Activated B cell treated with CpG ODN at 0.5 μM for 24 hours (primary cell): ENCODE measurements at regions of chr11 and their contacts with region 1.

Region 1: DNA sequence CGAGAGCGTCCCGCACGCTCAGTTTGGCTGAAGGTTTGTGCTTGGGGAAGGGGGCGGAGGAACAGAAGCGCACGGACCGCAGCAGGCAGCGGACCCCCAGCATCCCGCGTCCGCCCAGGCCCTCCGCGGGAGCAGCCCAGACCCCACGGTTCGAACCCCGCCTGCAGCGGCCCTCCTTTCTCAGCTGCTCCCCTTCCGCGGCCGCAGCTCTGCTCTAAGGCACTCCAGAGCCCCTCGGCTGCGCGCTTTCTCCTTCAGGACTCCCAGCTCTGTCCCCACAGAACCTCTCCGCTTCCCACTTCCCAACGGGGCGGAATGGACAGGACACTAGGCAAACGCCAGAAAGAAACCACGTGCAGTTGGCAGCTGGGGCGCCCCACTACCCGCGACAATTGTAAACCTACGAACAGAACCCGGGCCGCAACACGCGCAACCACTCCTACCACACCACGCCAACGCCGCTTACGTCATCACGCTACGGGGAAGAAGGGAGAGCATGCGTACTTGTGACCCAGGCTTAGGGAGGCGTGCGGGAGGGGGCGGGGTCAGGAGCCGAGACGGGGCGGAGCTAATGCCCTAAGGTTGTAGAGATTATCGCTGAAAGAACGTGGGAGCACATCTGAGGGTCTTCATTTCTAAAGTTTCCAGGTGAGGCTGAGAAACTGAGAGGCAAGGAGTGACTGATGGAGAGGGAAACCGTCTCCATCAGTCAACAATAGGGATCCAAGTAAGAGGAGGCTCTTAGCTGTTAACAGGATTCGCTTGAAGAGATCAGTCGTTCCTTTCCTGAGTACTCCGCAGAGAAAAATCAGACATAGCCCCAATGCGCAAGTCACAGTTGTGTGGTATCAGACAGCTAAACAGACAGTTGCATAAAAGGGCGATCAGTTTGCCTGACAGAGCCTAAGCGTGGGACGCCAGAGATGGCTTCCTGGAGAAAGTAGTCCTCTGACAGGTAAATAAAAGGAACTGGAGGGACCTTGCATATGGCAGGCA is at the start of gene NARS2:
- DNase-seq: peak; percentile 90
- ATAC-seq: peak; percentile 99
- H3K4me3 Mint-ChIP-seq: peak within 1 kb of the TSS; percentile 93
- H3K27ac Mint-ChIP-seq: peak within 1 kb of the TSS; percentile 94
- H3K4me1 Mint-ChIP-seq: peaks cover 32% of the 10 kb centered on the region
- H3K27me3 Mint-ChIP-seq: no peaks in the 10 kb centered on the region
- CTCF ChIP-seq: no peak
- total RNA-seq, gene NARS2: 16.5 and 18.9 TPM in 2 replicates

Region 2: GRCh38 chr11:77637345-77638165 is 937.1 kb before region 1 on chr11 and contains the start of gene CLNS1A:
- CTCF ChIA-PET with region 1: no interaction called
- POLR2A ChIA-PET with region 1: no interaction called
- intact Hi-C with region 1: loop called (anchors 10 kb)
- DNase-seq: peak; percentile 70
- ATAC-seq: peak; percentile 99
- H3K4me3 Mint-ChIP-seq: peak within 1 kb of the TSS; percentile 96
- H3K27ac Mint-ChIP-seq: peak within 1 kb of the TSS; percentile 94
- H3K4me1 Mint-ChIP-seq: peaks cover 41% of the 10 kb centered on the region
- H3K27me3 Mint-ChIP-seq: no peaks in the 10 kb centered on the region
- CTCF ChIP-seq: no peak
- total RNA-seq, gene CLNS1A: 112 and 116 TPM in 2 replicates

Region 3: GRCh38 chr11:77968337-77968736 is 606.3 kb before region 1 on chr11:
- CTCF ChIA-PET with region 1: no interaction called
- POLR2A ChIA-PET with region 1: no interaction called
- intact Hi-C with region 1: no loop called
- DNase-seq: no peak
- ATAC-seq: peak; percentile 60
- H3K4me3 Mint-ChIP-seq: no peak overlapping the region
- H3K27ac Mint-ChIP-seq: no peak overlapping the region
- H3K4me1 Mint-ChIP-seq: peaks cover 14% of the 10 kb centered on the region
- H3K27me3 Mint-ChIP-seq: no peaks in the 10 kb centered on the region
- CTCF ChIP-seq: no peak

Region 4: GRCh38 chr11:78079232-78080083 is 495.2 kb before region 1 on chr11 and contains the start of gene NDUFC2:
- CTCF ChIA-PET with region 1: no interaction called
- POLR2A ChIA-PET with region 1: interaction called, 6 read pairs
- intact Hi-C with region 1: loop called (anchors 10 kb)
- DNase-seq: peak; percentile 60
- ATAC-seq: peak; percentile 79
- H3K4me3 Mint-ChIP-seq: peak within 1 kb of the TSS; percentile 93
- H3K27ac Mint-ChIP-seq: peak within 1 kb of the TSS; percentile 86
- H3K4me1 Mint-ChIP-seq: peaks cover 51% of the 10 kb centered on the region
- H3K27me3 Mint-ChIP-seq: no peaks in the 10 kb centered on the region
- CTCF ChIP-seq: no peak
- total RNA-seq, gene NDUFC2: 83.5 and 88.4 TPM in 2 replicates

Region 5: DNA sequence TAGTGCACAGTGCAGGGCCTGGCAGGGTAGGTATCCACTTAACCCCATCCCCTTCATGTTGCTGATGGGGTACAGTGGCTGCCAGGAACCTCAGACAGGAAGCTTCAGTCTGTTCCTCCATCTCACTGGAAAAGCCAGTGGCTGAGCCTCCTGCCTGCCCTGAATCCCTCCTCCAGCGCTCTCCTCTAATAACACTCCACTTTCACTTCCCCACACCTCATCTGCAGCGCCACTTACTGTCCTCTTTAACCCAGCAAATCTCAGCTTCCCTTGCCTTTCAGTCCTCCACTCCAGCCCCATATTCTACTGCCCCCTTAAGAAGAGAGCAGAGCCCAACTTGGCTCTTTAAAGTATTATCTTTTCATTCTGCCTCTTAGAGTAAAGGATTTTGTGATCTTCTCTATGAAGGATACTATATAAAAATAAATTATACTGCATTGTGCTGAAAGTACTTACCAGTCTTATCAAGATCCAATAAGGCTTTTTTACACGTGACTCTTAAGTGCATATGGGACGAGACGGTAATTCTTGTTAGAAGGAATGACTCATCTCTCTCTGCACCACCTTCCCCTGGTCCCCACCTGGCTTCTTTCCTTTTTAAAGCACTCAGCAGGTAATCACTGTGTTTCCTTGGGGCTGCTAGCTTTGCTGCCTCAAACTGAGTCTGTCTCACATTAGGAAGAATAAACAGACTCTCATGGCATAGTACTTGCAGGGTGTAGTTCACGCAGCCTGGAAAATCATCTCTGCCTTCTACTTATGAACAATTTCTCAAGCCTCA is 238.0 kb after region 1 on chr11:
- CTCF ChIA-PET with region 1: no interaction called
- POLR2A ChIA-PET with region 1: no interaction called
- intact Hi-C with region 1: no loop called
- DNase-seq: no peak
- ATAC-seq: no peak
- H3K4me3 Mint-ChIP-seq: no peak overlapping the region
- H3K27ac Mint-ChIP-seq: no peak overlapping the region
- H3K4me1 Mint-ChIP-seq: no peaks in the 10 kb centered on the region
- H3K27me3 Mint-ChIP-seq: no peaks in the 10 kb centered on the region
- CTCF ChIP-seq: no peak